CD4-positive, alpha-beta T cell (primary cell): ENCODE measurements at regions of chrX and their contacts with region 1.

Region 1: GRCh38 chrX:79270401-79270800 is 96.7 kb downstream of the ITM2A start:
- DNase-seq: peak; percentile 55 to 88 (median 72)
- ATAC-seq: peak; percentile 95
- H3K4me3 ChIP-seq: no peak overlapping the region
- H3K4me3 Mint-ChIP-seq: peak overlapping the region; percentile 53
- H3K27ac ChIP-seq: peak overlapping the region; percentile 3 to 29
- H3K27ac Mint-ChIP-seq: peak overlapping the region; percentile 87
- H3K4me1 ChIP-seq: peaks cover 3% of the 10 kb centered on the region
- H3K4me1 Mint-ChIP-seq: peaks cover 59% of the 10 kb centered on the region
- H3K27me3 ChIP-seq: no peaks in the 10 kb centered on the region
- H3K27me3 Mint-ChIP-seq: no peaks in the 10 kb centered on the region
- CTCF ChIP-seq: peak; percentile 75

Region 2: DNA sequence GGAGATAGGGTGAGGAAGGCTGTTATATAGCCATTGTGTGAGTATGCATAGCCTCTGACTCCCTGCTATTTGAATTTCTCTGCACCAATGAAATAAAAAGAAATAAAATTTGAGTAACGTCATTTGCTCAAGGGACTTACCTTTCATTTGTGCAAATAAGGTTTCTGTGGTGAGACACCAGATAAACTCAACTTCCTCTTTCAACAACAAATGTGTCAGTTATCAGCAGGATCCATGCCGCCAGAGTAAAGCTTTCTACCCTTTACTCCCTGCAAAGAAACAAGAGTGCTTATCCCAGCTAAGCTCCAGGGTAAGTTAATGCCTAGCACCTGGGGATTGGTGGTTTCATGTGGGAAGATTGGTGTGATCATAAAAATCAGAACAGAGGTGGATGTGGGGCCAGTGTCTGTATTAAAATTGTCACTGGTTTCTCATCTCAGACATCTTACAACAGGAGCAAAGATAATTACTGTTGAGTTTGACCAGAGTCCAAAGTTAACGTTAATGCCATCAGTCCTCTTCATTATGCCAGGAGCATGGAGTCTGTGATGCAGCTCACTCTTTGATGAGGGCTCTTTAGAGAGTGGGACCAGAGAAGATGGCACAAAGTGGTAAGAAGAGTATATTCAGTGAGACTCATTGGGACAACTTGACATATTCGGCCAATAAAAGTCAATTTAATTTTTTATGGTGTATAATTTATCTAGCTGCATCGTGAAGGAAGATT is 325.1 kb before region 1 on chrX and contains the start of gene P2RY10:
- CTCF ChIA-PET with region 1: interaction called, 3 read pairs
- POLR2A ChIA-PET with region 1: interaction called, 3 read pairs
- intact Hi-C with region 1: loop called (anchors 5 to 10 kb)
- DNase-seq: peak in 12 of 14 experiments; percentile 7 to 85 (median 29)
- ATAC-seq: peak; percentile 87
- H3K4me3 ChIP-seq: peak within 1 kb of the TSS; percentile 77
- H3K4me3 Mint-ChIP-seq: peak within 1 kb of the TSS; percentile 93
- H3K27ac ChIP-seq: peak within 1 kb of the TSS; percentile 68 to 83
- H3K27ac Mint-ChIP-seq: peak within 1 kb of the TSS; percentile 96
- H3K4me1 ChIP-seq: peaks cover 7% of the 10 kb centered on the region
- H3K4me1 Mint-ChIP-seq: peaks cover 73% of the 10 kb centered on the region
- H3K27me3 ChIP-seq: no peaks in the 10 kb centered on the region
- H3K27me3 Mint-ChIP-seq: no peaks in the 10 kb centered on the region
- CTCF ChIP-seq: no peak
- total RNA-seq, gene P2RY10: 85.3 to 98.5 TPM

Region 3: GRCh38 chrX:79081895-79082512 is 188.4 kb before region 1 on chrX:
- CTCF ChIA-PET with region 1: interaction called, 8 read pairs
- POLR2A ChIA-PET with region 1: interaction called, 7 read pairs
- intact Hi-C with region 1: loop called (anchors 5 kb)
- DNase-seq: peak in 7 of 14 experiments; percentile 8 to 79 (median 51)
- ATAC-seq: peak; percentile 88
- H3K4me3 ChIP-seq: no peak overlapping the region
- H3K4me3 Mint-ChIP-seq: peak overlapping the region; percentile 82
- H3K27ac ChIP-seq: no peak overlapping the region
- H3K27ac Mint-ChIP-seq: peak overlapping the region; percentile 82
- H3K4me1 ChIP-seq: peaks cover 2% of the 10 kb centered on the region
- H3K4me1 Mint-ChIP-seq: peaks cover 33% of the 10 kb centered on the region
- H3K27me3 ChIP-seq: no peaks in the 10 kb centered on the region
- H3K27me3 Mint-ChIP-seq: no peaks in the 10 kb centered on the region
- CTCF ChIP-seq: peak; percentile 43

Region 4: GRCh38 chrX:79259073-79259689 is 11.2 kb before region 1 on chrX:
- CTCF ChIA-PET with region 1: interaction called, 4 read pairs
- POLR2A ChIA-PET with region 1: interaction called, 14 read pairs
- intact Hi-C with region 1: no loop called
- DNase-seq: peak in 13 of 14 experiments; percentile 3 to 85 (median 34)
- ATAC-seq: peak; percentile 88
- H3K4me3 ChIP-seq: no peak overlapping the region
- H3K4me3 Mint-ChIP-seq: peak overlapping the region; percentile 84
- H3K27ac ChIP-seq: peak overlapping the region; percentile 52 to 75
- H3K27ac Mint-ChIP-seq: peak overlapping the region; percentile 99
- H3K4me1 ChIP-seq: peaks cover 16% of the 10 kb centered on the region
- H3K4me1 Mint-ChIP-seq: peaks cover 91% of the 10 kb centered on the region
- H3K27me3 ChIP-seq: no peaks in the 10 kb centered on the region
- H3K27me3 Mint-ChIP-seq: no peaks in the 10 kb centered on the region
- CTCF ChIP-seq: no peak

Region 5: GRCh38 chrX:79336869-79337815 is 66.7 kb after region 1 on chrX:
- CTCF ChIA-PET with region 1: no interaction called
- POLR2A ChIA-PET with region 1: no interaction called
- intact Hi-C with region 1: no loop called
- DNase-seq: peak in 3 of 14 experiments; percentile 38 to 64 (median 42)
- ATAC-seq: peak; percentile 70
- H3K4me3 ChIP-seq: peak overlapping the region; percentile 49
- H3K4me3 Mint-ChIP-seq: peak overlapping the region; percentile 88
- H3K27ac ChIP-seq: peak overlapping the region; percentile 25 to 48
- H3K27ac Mint-ChIP-seq: peak overlapping the region; percentile 86
- H3K4me1 ChIP-seq: peaks cover 7% of the 10 kb centered on the region
- H3K4me1 Mint-ChIP-seq: peaks cover 22% of the 10 kb centered on the region
- H3K27me3 ChIP-seq: no peaks in the 10 kb centered on the region
- H3K27me3 Mint-ChIP-seq: no peaks in the 10 kb centered on the region
- CTCF ChIP-seq: no peak

Region 6: DNA sequence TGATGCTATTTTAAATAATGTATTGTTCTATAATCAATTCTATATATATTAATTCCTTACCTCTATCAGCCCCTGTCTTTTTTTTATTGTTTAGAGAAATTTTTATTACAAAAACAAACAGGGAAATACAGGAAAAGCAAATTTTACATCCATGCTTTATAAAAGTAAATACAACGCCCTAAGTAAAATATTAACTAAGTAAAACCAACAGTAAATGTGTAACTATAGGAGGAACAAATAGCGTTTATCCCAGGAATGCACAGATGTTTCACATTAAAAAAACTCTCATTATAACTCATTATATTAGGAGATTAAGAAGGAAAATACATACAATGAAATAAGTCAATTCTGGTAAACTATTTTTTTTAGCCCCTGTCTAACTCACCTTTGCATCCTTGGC is 104.9 kb after region 1 on chrX:
- CTCF ChIA-PET with region 1: no interaction called
- POLR2A ChIA-PET with region 1: no interaction called
- intact Hi-C with region 1: no loop called
- DNase-seq: no peak
- ATAC-seq: no peak
- H3K4me3 ChIP-seq: no peak overlapping the region
- H3K4me3 Mint-ChIP-seq: no peak overlapping the region
- H3K27ac ChIP-seq: no peak overlapping the region
- H3K27ac Mint-ChIP-seq: no peak overlapping the region
- H3K4me1 ChIP-seq: no peaks in the 10 kb centered on the region
- H3K4me1 Mint-ChIP-seq: peaks cover 3% of the 10 kb centered on the region
- H3K27me3 ChIP-seq: no peaks in the 10 kb centered on the region
- H3K27me3 Mint-ChIP-seq: no peaks in the 10 kb centered on the region
- CTCF ChIP-seq: no peak

Region 7: GRCh38 chrX:79412972-79413371 is 142.6 kb after region 1 on chrX:
- CTCF ChIA-PET with region 1: interaction called, 3 read pairs
- POLR2A ChIA-PET with region 1: interaction called, 6 read pairs
- intact Hi-C with region 1: loop called (anchors 5 kb)
- DNase-seq: peak in 3 of 14 experiments; percentile 52 to 68 (median 66)
- ATAC-seq: no peak
- H3K4me3 ChIP-seq: peak overlapping the region; percentile 54
- H3K4me3 Mint-ChIP-seq: peak overlapping the region; percentile 87
- H3K27ac ChIP-seq: no peak overlapping the region
- H3K27ac Mint-ChIP-seq: peak overlapping the region; percentile 69
- H3K4me1 ChIP-seq: peaks cover 6% of the 10 kb centered on the region
- H3K4me1 Mint-ChIP-seq: peaks cover 37% of the 10 kb centered on the region
- H3K27me3 ChIP-seq: no peaks in the 10 kb centered on the region
- H3K27me3 Mint-ChIP-seq: no peaks in the 10 kb centered on the region
- CTCF ChIP-seq: peak; percentile 54